ENCODE measurements at regions of chr19 and their contacts with region 1.

Region 1: DNA sequence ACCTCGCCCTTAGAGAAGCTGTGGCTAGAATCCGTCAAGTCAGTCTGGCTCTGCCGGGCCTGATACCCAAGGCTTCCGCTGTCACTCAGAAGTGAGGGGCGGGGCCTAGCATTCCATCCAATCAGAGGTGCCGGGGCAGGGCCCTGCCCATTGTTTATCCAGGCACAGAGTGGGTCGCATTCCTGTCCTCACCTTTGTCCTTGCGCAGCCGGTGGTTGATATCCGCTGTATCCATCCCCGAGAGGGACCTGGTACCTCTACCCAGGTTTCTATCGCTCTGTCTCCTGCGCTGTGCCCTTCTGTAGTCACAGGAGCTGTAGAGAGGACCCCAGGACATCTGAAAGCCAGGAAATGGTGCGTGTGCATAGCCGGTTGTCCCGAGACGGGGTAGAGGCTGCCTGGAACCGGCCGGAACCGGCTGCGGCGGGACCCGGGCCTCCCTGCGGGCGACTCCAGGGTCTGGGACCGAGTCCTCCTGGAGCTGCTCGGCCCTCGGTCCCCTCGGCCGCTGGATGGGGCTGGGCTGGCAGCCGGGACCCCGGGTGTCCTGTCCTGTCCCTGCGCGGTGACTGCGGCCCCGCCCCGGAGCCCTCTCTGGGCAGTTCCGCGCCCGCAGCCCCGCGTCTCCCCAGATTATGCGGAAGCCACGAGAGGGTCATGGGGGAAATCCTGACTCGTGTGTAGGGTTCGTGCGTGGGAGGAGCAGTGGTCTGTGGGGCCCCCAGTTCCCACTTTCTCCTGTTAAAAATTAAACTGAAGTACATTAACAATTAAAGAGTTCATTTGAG is at the start of gene ZNF763:
- DNase-seq: peak; percentile 81 to 89
- ATAC-seq: peak; percentile 96 to 98
- H3K4me3 ChIP-seq: peak within 1 kb of the TSS; percentile 67 to 88 (median 76)
- H3K27ac ChIP-seq: peak within 1 kb of the TSS; percentile 78 to 88 (median 86)
- H3K4me1 ChIP-seq: peaks cover 11 to 15% of the 10 kb centered on the region in 2 donors
- H3K27me3 ChIP-seq: no peaks in the 10 kb centered on the region
- CTCF ChIP-seq: no peak
- POLR2A ChIP-seq: peak; percentile 28 to 56
- total RNA-seq, gene ZNF763: 0.46 to 0.80 (median 0.54) TPM

Region 2: GRCh38 chr19:12064590-12065538 is 99.8 kb after region 1 on chr19 and contains the start of gene ZNF844:
- in situ Hi-C with region 1: no loop called
- intact Hi-C with region 1: loop called (anchors 1 kb)
- DNase-seq: peak; percentile 93 to 97
- ATAC-seq: peak; percentile 96 to 97
- H3K4me3 ChIP-seq: peak within 1 kb of the TSS; percentile 63 to 92 (median 82)
- H3K27ac ChIP-seq: peak within 1 kb of the TSS; percentile 85 to 97 (median 92)
- H3K4me1 ChIP-seq: peaks cover 0 to 4% of the 10 kb centered on the region in 2 donors
- H3K27me3 ChIP-seq: no peaks in the 10 kb centered on the region
- CTCF ChIP-seq: no peak
- POLR2A ChIP-seq: peak; percentile 80 to 95
- total RNA-seq, gene ZNF844: 2.2 to 5.7 (median 4.9) TPM

Region 3: DNA sequence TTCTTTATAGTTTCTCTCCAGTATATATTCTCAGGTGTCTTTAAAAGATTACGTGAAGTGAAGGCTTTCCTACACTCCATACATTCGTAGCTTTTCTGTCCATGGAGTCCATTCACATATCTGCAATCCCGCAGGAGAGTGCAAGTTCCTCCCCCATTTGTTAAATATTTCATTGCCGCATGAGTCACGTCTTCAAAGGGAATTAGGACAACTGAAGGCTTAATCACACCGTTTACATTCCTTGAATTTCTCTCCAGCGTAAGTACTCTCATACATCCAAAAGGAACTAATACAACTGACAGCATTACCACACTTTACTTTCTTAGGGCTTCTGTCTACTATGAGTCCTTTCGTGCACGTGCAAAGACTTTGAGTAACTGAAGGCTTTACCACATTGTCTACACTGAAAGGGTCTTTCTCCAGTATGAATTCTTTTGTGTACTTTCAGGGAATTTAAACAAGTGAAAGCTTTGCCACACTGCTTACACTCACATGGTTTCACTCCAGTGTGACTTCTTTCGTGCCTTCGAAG is 615.2 kb after region 1 on chr19:
- in situ Hi-C with region 1: no loop called
- intact Hi-C with region 1: no loop called
- DNase-seq: no peak
- ATAC-seq: no peak
- H3K4me3 ChIP-seq: no peak overlapping the region
- H3K27ac ChIP-seq: no peak overlapping the region
- H3K4me1 ChIP-seq: no peaks in the 10 kb centered on the region
- H3K27me3 ChIP-seq: no peaks in the 10 kb centered on the region
- CTCF ChIP-seq: no peak
- POLR2A ChIP-seq: no peak